ENCODE measurements at regions of chr2 and their contacts with region 1.

Region 1: GRCh38 chr2:128090945-128091725 is at the start of gene UGGT1:
- DNase-seq: peak; percentile 97
- H3K4me3 ChIP-seq: peak within 1 kb of the TSS; percentile 69 to 92 (median 91)
- H3K27ac ChIP-seq: peak within 1 kb of the TSS; percentile 85
- H3K4me1 ChIP-seq: peaks cover 5% of the 10 kb centered on the region
- H3K27me3 ChIP-seq: no peaks in the 10 kb centered on the region
- CTCF ChIP-seq: no peak
- total RNA-seq, gene UGGT1: 59.8 to 66.2 TPM

Region 2: DNA sequence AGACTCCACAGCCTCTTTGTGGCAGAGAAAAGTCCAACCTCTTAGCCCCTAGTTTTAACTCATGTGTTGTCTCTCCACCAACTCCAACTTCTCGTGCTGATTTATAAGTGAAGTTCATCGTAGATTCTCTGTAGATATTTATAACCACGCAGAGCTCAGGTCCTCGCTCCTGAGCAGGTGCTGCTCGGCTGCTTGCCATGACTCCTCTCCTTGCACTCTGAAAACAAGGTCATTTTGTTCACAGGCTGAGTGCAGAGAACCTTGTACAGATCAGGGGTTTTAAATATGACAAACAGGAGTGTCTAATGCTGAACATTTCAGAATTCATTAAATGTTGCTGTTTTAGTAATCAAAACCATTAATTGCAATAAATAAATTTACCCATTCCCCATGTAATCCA is 1765.9 kb before region 1 on chr2:
- CTCF ChIA-PET with region 1: no interaction called
- dilution Hi-C with region 1: no loop called
- in situ Hi-C with region 1: no loop called
- intact Hi-C with region 1: no loop called
- DNase-seq: no peak
- H3K4me3 ChIP-seq: no peak overlapping the region
- H3K27ac ChIP-seq: no peak overlapping the region
- H3K4me1 ChIP-seq: no peaks in the 10 kb centered on the region
- H3K27me3 ChIP-seq: no peaks in the 10 kb centered on the region
- CTCF ChIP-seq: no peak

Region 3: GRCh38 chr2:127857265-127857808 is 233.8 kb before region 1 on chr2:
- CTCF ChIA-PET with region 1: no interaction called
- dilution Hi-C with region 1: no loop called
- in situ Hi-C with region 1: no loop called
- intact Hi-C with region 1: loop called (anchors 5 kb)
- DNase-seq: peak; percentile 20
- H3K4me3 ChIP-seq: peak overlapping the region; percentile 79 to 98 (median 97)
- H3K27ac ChIP-seq: peak overlapping the region; percentile 54
- H3K4me1 ChIP-seq: peaks cover 13% of the 10 kb centered on the region
- H3K27me3 ChIP-seq: no peaks in the 10 kb centered on the region
- CTCF ChIP-seq: no peak

Region 4: GRCh38 chr2:127932199-127932878 is 158.8 kb before region 1 on chr2:
- CTCF ChIA-PET with region 1: no interaction called
- dilution Hi-C with region 1: no loop called
- in situ Hi-C with region 1: no loop called
- intact Hi-C with region 1: loop called (anchors 2 kb)
- DNase-seq: peak; percentile 90
- H3K4me3 ChIP-seq: no peak overlapping the region
- H3K27ac ChIP-seq: no peak overlapping the region
- H3K4me1 ChIP-seq: peaks cover 7% of the 10 kb centered on the region
- H3K27me3 ChIP-seq: no peaks in the 10 kb centered on the region
- CTCF ChIP-seq: no peak

Region 5: GRCh38 chr2:128027801-128028667 is 63.1 kb before region 1 on chr2 and contains the start of gene SAP130:
- CTCF ChIA-PET with region 1: no interaction called
- dilution Hi-C with region 1: no loop called
- in situ Hi-C with region 1: no loop called
- intact Hi-C with region 1: loop called (anchors 2 kb)
- DNase-seq: peak; percentile 93
- H3K4me3 ChIP-seq: peak within 1 kb of the TSS; percentile 79 to 100 (median 92)
- H3K27ac ChIP-seq: peak within 1 kb of the TSS; percentile 61
- H3K4me1 ChIP-seq: no peaks in the 10 kb centered on the region
- H3K27me3 ChIP-seq: no peaks in the 10 kb centered on the region
- CTCF ChIP-seq: no peak
- total RNA-seq, gene SAP130: 8.7 to 21.9 TPM

Region 6: DNA sequence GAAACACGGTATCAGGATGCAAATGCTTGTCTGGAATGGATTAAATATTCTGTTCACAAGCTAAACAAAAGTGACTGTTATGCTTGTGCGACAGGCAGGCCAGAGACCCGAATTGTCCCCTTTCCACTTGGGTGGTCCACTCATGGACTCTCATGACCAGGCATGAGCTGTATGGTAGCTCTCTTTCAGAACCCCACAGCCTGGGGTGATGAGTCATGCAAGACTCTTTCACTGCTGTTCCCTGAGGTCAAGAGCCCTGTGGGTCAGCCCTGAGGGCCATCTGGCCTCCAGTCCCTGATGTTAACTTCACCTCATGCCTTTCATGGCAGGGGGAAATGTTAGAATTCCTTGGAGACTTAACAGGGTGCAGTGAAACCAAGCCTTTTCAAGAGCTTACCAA is 49.6 kb before region 1 on chr2:
- CTCF ChIA-PET with region 1: no interaction called
- dilution Hi-C with region 1: loop called (anchors 5 kb)
- in situ Hi-C with region 1: no loop called
- intact Hi-C with region 1: no loop called
- DNase-seq: no peak
- H3K4me3 ChIP-seq: no peak overlapping the region
- H3K27ac ChIP-seq: no peak overlapping the region
- H3K4me1 ChIP-seq: no peaks in the 10 kb centered on the region
- H3K27me3 ChIP-seq: no peaks in the 10 kb centered on the region
- CTCF ChIP-seq: no peak

Region 7: GRCh38 chr2:128134573-128134972 is 43.4 kb after region 1 on chr2:
- CTCF ChIA-PET with region 1: interaction called, 18 read pairs
- dilution Hi-C with region 1: no loop called
- in situ Hi-C with region 1: no loop called
- intact Hi-C with region 1: no loop called
- DNase-seq: no peak
- H3K4me3 ChIP-seq: no peak overlapping the region
- H3K27ac ChIP-seq: no peak overlapping the region
- H3K4me1 ChIP-seq: no peaks in the 10 kb centered on the region
- H3K27me3 ChIP-seq: no peaks in the 10 kb centered on the region
- CTCF ChIP-seq: no peak

Region 8: DNA sequence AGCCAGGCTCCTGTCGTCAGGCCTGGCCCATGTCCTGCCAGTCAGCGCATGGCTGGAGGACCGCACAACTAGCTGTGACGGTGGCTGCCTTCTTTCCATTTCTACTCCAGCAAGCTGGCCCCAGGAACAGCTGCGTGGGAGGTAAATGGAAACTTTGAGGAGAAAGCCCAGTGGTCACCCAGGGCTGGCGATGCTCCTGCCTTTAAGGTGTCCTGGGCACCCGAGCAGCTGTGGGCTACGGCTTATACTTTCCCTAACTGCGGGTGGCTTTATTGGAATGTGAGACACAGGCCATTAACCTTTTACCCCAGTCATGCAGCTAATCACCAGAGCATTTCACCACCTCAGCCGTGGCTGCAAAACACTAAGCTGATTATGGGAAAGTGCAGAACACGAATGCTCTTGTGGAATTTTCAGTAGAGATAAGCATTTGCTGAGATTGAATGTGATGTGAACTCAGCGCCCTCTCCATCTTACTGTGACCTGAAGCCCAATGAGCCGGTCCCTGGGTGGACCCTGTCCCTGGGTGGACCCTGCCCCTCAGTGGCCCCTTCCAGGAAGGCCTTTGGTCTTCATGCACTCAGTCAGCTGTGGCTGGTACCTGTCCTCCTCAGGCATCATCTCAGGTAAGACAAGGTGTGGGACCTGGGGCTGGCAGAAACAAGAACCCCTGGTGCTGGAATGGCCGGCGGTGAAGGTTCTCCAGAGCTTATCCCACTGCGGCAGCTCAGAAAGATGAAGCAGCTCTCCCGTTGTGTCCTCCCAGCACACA is 502.9 kb after region 1 on chr2:
- CTCF ChIA-PET with region 1: no interaction called
- dilution Hi-C with region 1: no loop called
- in situ Hi-C with region 1: no loop called
- intact Hi-C with region 1: no loop called
- DNase-seq: no peak
- H3K4me3 ChIP-seq: no peak overlapping the region
- H3K27ac ChIP-seq: no peak overlapping the region
- H3K4me1 ChIP-seq: no peaks in the 10 kb centered on the region
- H3K27me3 ChIP-seq: peaks cover 3% of the 10 kb centered on the region
- CTCF ChIP-seq: no peak

Measured in mammary epithelial cell (primary cell).